ENCODE measurements at regions of chr5 and their contacts with region 1.

Region 1: DNA sequence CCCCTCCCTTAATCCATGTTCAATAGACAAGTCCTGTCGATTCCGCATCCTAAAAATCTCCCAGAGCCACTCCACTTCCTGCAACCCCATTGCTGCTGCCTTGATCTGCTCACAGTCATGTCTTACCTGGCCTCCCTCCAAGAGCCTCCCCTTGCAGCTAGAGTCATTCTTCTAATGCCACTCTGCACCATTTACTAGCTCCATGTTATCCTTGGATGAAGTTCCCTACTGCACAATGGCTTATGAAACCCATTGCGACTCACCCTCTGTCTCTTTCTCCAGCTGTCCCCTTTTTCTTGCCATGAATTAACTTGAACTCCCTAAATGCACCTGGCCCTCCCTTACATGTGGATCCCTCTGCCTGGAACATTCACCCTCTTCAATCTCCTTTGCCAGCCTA is 39.5 kb downstream of the MEGF10 start:
- DNase-seq: no peak
- H3K4me3 ChIP-seq: no peak overlapping the region
- H3K27ac ChIP-seq: no peak overlapping the region
- H3K4me1 ChIP-seq: no peaks in the 10 kb centered on the region
- H3K27me3 ChIP-seq: no peaks in the 10 kb centered on the region
- CTCF ChIP-seq: no peak
- EP300 ChIP-seq: no peak
- POLR2A ChIP-seq: no peak

Region 2: DNA sequence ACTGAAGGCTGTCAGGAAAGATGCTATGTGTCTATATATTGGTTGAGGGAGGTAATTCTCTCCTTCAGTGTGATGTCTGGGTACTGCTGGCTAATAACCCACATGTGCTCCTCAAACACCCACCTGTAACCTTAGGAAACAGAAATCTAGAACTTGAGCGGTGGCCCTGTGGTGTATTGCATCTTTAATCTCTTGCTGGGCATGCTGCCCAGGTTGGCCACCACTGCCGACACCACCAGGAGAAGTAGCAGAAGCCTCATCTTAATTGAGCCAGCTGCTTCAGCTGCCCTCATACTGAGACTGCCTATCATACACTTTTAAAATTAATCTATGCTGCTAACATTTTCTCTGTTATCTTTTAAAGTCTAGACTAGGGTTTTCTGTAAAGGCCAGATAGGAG is 153.3 kb before region 1 on chr5:
- intact Hi-C with region 1: loop called in 1 of 4 experiments (anchors 10 kb)
- DNase-seq: no peak
- H3K4me3 ChIP-seq: no peak overlapping the region
- H3K27ac ChIP-seq: no peak overlapping the region
- H3K4me1 ChIP-seq: no peaks in the 10 kb centered on the region
- H3K27me3 ChIP-seq: no peaks in the 10 kb centered on the region
- CTCF ChIP-seq: no peak
- EP300 ChIP-seq: no peak
- POLR2A ChIP-seq: no peak